Mammary epithelial cell (primary cell): ENCODE measurements at regions of chr3 and their contacts with region 1.

Region 1: GRCh38 chr3:129732200-129732876 is 125.9 kb upstream of the PLXND1 start:
- DNase-seq: peak; percentile 69
- H3K4me3 ChIP-seq: no peak overlapping the region
- H3K27ac ChIP-seq: peak overlapping the region; percentile 23
- H3K4me1 ChIP-seq: peaks cover 16% of the 10 kb centered on the region
- H3K27me3 ChIP-seq: no peaks in the 10 kb centered on the region
- CTCF ChIP-seq: no peak

Region 2: DNA sequence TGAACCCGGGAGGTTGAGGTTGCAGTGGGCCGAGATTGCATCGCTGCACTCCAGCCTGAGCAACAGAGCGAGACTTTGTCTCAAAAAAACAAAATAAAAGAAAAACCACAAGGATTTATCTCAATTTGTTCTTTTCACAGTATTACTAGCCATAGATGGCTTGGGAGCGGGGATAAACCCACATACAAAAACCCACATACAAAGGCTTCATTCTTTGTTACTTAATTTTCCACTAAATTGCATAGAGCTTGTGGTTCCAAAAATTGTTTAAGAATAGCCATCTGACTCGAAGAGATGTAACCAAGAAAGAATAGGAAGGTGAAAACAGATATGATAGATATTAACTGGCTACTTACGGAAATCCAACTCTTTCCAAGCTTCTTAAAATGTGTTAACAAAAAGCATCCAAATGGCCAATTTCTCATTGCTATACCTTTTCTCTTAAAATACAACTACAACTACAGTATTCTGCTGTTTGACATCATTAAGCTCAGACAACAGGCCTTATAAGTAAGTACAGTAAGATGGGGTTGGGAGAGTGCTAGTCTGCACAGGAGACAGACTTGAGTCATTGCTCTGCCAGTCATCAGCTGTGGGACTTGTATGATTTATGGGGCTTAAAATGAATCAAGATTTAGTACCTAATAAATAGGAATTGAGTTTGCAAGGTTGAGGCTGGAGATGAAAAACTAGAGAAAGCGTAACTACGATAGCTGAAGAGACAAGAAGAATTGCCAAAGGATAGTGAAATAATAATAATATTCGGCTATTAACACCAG is 29.2 kb before region 1 on chr3:
- CTCF ChIA-PET with region 1: no interaction called
- dilution Hi-C with region 1: no loop called
- in situ Hi-C with region 1: no loop called
- intact Hi-C with region 1: no loop called
- DNase-seq: peak; percentile 47
- H3K4me3 ChIP-seq: no peak overlapping the region
- H3K27ac ChIP-seq: no peak overlapping the region
- H3K4me1 ChIP-seq: no peaks in the 10 kb centered on the region
- H3K27me3 ChIP-seq: no peaks in the 10 kb centered on the region
- CTCF ChIP-seq: no peak

Region 3: DNA sequence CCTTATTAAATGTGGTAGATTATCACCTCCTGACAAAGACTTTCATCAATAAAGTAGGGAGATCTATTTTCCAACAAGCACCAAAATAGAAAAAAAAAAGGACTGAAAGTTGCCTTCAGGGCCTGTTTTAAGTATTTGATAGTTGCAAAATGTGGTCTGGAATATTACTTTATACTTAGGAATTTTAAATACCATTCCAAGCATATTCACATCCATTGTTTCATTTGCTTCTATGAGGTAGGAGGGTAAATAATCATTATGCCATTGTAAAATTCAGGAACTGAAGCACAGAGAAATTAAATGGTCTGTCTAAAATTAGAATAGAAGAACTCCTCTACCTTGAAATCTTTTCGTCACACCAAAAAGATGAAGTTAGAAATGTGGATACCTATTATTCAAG is 51.1 kb after region 1 on chr3:
- CTCF ChIA-PET with region 1: no interaction called
- dilution Hi-C with region 1: loop called (anchors 5 kb)
- in situ Hi-C with region 1: no loop called
- intact Hi-C with region 1: no loop called
- DNase-seq: no peak
- H3K4me3 ChIP-seq: no peak overlapping the region
- H3K27ac ChIP-seq: no peak overlapping the region
- H3K4me1 ChIP-seq: peaks cover 5% of the 10 kb centered on the region
- H3K27me3 ChIP-seq: no peaks in the 10 kb centered on the region
- CTCF ChIP-seq: no peak